Naive thymus-derived CD4-positive, alpha-beta T cell (primary cell): ENCODE measurements at regions of chr19 and their contacts with region 1.

Region 1: GRCh38 chr19:18340190-18340989 is at the start of gene PGPEP1:
- DNase-seq: peak in 8 of 9 donors; percentile 32 to 80 (median 54)
- ATAC-seq: peak; percentile 81
- H3K4me3 ChIP-seq: peak within 1 kb of the TSS; percentile 66
- H3K4me3 Mint-ChIP-seq: peak within 1 kb of the TSS; percentile 77 to 95 (median 90)
- H3K27ac ChIP-seq: peak within 1 kb of the TSS; percentile 74
- H3K27ac Mint-ChIP-seq: peak within 1 kb of the TSS; percentile 70 to 96 (median 90)
- H3K4me1 ChIP-seq: peaks cover 11 to 13% of the 10 kb centered on the region in 2 donors
- H3K4me1 Mint-ChIP-seq: peaks cover 12 to 25% (median 21%) of the 10 kb centered on the region in 7 donors
- H3K27me3 ChIP-seq: no peaks in the 10 kb centered on the region
- H3K27me3 Mint-ChIP-seq: no peaks in the 10 kb centered on the region
- total RNA-seq, gene PGPEP1: 26.6 to 57.1 (median 43.8) TPM

Region 2: DNA sequence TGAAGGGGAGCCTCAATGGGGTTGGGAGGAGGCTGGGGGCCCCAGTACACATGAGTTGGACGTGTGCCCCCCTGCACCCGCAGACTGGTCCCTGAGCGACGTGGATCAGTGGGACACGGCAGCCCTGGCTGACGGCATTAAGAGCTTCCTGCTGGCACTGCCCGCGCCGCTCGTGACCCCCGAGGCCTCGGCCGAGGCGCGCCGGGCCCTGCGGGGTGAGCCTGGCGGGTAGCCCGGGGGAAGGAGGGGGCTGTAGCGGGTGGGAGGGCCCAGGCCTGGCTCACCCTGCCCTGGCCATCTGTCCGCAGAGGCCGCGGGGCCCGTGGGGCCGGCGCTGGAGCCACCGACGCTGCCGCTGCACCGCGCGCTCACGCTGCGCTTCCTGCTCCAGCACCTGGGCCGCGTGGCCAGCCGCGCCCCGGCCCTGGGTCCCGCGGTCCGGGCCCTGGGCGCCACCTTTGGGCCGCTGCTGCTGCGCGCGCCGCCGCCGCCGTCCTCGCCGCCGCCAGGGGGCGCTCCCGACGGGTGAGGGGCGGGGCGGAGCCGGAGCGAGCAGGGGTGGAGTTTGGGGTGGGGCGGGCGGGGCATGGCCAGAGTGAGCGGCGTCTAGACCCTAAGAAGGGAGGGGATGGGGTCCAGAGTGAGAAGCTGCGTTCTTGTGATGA is 179.3 kb before region 1 on chr19:
- CTCF ChIA-PET with region 1: no interaction called
- POLR2A ChIA-PET with region 1: no interaction called
- intact Hi-C with region 1: no loop called
- DNase-seq: peak; percentile 64 to 96 (median 80)
- ATAC-seq: peak; percentile 100
- H3K4me3 ChIP-seq: no peak overlapping the region
- H3K4me3 Mint-ChIP-seq: peak overlapping the region in 8 of 10 donors; percentile 39 to 71 (median 56)
- H3K27ac ChIP-seq: peak overlapping the region; percentile 62
- H3K27ac Mint-ChIP-seq: peak overlapping the region in 4 of 9 donors; percentile 20 to 72 (median 45)
- H3K4me1 ChIP-seq: peaks cover 0 to 13% of the 10 kb centered on the region in 2 donors
- H3K4me1 Mint-ChIP-seq: peaks cover 0 to 18% (median 12%) of the 10 kb centered on the region in 7 donors
- H3K27me3 ChIP-seq: no peaks in the 10 kb centered on the region
- H3K27me3 Mint-ChIP-seq: no peaks in the 10 kb centered on the region

Region 3: DNA sequence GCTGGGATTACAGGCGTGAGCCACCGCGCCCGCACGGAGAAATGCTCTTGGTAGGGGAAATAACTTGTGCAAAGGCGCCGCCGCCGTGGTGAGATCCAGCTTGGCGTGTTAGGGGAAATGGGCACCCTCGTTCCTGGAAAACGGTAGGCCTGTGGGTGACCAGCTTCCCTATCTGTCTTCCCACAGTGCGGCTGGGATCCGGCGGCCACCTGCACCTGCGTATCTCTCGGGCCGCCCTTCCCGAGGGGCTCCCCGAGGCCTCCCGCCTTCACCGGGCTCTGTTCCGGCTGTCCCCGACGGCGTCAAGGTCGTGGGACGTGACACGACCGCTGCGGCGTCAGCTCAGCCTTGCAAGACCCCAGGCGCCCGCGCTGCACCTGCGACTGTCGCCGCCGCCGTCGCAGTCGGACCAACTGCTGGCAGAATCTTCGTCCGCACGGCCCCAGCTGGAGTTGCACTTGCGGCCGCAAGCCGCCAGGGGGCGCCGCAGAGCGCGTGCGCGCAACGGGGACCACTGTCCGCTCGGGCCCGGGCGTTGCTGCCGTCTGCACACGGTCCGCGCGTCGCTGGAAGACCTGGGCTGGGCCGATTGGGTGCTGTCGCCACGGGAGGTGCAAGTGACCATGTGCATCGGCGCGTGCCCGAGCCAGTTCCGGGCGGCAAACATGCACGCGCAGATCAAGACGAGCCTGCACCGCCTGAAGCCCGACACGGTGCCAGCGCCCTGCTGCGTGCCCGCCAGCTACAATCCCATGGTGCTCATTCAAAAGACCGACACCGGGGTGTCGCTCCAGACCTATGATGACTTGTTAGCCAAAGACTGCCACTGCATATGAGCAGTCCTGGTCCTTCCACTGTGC is 47.9 kb after region 1 on chr19:
- CTCF ChIA-PET with region 1: interaction called, 3 read pairs
- POLR2A ChIA-PET with region 1: no interaction called
- intact Hi-C with region 1: loop called (anchors 1 to 2 kb)
- DNase-seq: peak; percentile 38 to 86 (median 65)
- ATAC-seq: peak; percentile 90
- H3K4me3 ChIP-seq: peak overlapping the region; percentile 38
- H3K4me3 Mint-ChIP-seq: peak overlapping the region; percentile 62 to 83 (median 78)
- H3K27ac ChIP-seq: no peak overlapping the region
- H3K27ac Mint-ChIP-seq: peak overlapping the region in 1 of 9 donors; percentile 42
- H3K4me1 ChIP-seq: peaks cover 0 to 4% of the 10 kb centered on the region in 2 donors
- H3K4me1 Mint-ChIP-seq: peaks cover 0 to 12% (median 7%) of the 10 kb centered on the region in 7 donors
- H3K27me3 ChIP-seq: peaks cover 0 to 11% of the 10 kb centered on the region in 2 donors
- H3K27me3 Mint-ChIP-seq: peaks cover 19 to 73% (median 29%) of the 10 kb centered on the region in 5 donors